MCF 10A (cell line): ENCODE measurements at regions of chr11 and their contacts with region 1.

Region 1: GRCh38 chr11:72585762-72586311 is 88.4 kb downstream of the PDE2A start:
- DNase-seq: peak; percentile 71
- H3K4me3 Mint-ChIP-seq: no peak overlapping the region
- H3K27ac Mint-ChIP-seq: no peak overlapping the region
- H3K4me1 Mint-ChIP-seq: peaks cover 3% of the 10 kb centered on the region
- H3K27me3 Mint-ChIP-seq: peaks cover 37% of the 10 kb centered on the region
- CTCF ChIP-seq: peak; percentile 77

Region 2: GRCh38 chr11:72483412-72484186 is 102.2 kb before region 1 on chr11:
- CTCF ChIA-PET with region 1: interaction called, 11 read pairs
- POLR2A ChIA-PET with region 1: no interaction called
- intact Hi-C with region 1: loop called (anchors 5 kb)
- DNase-seq: peak; percentile 44
- H3K4me3 Mint-ChIP-seq: no peak overlapping the region
- H3K27ac Mint-ChIP-seq: peak overlapping the region; percentile 91
- H3K4me1 Mint-ChIP-seq: peaks cover 15% of the 10 kb centered on the region
- H3K27me3 Mint-ChIP-seq: no peaks in the 10 kb centered on the region
- CTCF ChIP-seq: no peak

Region 3: DNA sequence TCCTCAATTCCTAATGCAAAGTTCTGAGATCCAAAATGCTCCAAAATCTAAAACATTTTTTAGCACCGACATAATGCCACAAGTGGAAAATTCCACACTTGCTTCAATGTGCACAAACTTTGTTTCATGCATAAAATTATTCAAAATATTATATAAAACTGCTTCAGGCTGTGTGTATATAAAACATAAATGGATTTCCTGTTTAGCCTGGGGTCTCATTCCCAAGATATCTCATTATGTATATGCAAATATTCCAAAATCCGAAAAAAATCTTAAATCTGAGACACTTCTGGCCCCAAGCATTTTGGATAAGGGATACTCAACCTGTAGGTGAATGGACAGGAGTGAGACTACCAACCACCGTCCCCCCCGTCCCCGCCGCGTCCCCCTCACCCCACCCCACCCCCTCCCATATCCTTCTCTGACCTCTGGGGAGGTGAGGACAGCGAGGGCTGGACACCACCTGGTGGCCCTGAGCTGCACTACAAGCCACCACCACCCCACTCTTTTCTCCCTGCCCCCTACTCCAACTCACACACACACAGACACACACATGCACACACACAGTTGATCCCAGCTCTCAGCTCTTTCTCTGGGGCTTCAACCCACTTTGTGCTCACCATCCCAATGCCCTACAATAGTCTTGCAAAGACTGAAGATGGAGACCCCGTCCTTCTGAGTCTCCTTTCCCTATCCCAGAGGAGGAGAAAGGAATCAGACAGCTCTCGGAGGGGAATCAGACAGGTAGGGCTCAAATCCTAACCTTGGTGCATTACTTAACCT is 12.6 kb before region 1 on chr11:
- CTCF ChIA-PET with region 1: interaction called, 15 read pairs
- POLR2A ChIA-PET with region 1: no interaction called
- intact Hi-C with region 1: no loop called
- DNase-seq: peak; percentile 41
- H3K4me3 Mint-ChIP-seq: no peak overlapping the region
- H3K27ac Mint-ChIP-seq: no peak overlapping the region
- H3K4me1 Mint-ChIP-seq: peaks cover 39% of the 10 kb centered on the region
- H3K27me3 Mint-ChIP-seq: no peaks in the 10 kb centered on the region
- CTCF ChIP-seq: peak; percentile 67

Region 4: DNA sequence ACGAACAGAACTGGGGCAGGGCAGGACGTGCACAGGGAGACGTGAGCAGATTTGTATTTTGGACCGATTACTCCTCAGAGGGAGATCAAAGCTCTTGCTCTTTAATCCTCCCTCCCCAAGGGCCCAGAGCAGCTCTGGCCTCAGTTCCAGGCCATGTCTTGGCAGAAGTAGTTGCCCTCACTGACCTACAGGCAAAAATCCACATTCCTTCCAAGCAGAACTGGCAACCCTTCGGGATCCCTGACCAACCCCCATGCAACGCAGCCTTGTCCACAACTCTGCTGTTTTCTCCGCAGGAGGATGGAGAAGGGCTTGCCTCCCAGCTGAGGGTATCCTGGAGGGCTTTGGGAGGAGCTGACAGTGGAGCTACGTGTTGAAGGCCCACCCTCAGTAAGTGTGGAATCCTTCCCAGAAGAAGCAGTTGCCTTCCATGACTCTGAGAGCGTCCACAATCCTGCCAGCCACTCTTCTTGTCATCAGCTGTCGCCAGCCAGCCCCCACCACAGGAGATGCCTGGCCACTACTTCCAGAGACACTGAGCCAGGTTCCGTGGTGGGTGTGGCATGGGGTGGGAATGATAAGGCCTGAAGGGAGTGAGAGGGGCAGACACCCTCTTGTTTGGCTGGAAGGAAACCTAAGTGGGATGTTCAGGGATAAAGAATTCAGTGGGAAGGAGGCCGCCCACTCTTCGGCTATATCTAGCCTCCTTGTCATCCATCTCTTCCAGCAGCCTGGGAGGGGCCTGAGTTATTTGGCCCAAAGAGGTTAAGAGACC is 20.3 kb after region 1 on chr11:
- CTCF ChIA-PET with region 1: interaction called, 15 read pairs
- POLR2A ChIA-PET with region 1: no interaction called
- intact Hi-C with region 1: no loop called
- DNase-seq: no peak
- H3K4me3 Mint-ChIP-seq: no peak overlapping the region
- H3K27ac Mint-ChIP-seq: no peak overlapping the region
- H3K4me1 Mint-ChIP-seq: no peaks in the 10 kb centered on the region
- H3K27me3 Mint-ChIP-seq: peaks cover 48% of the 10 kb centered on the region
- CTCF ChIP-seq: no peak

Region 5: GRCh38 chr11:72642884-72643511 is 57.2 kb after region 1 on chr11:
- CTCF ChIA-PET with region 1: interaction called, 8 read pairs
- POLR2A ChIA-PET with region 1: no interaction called
- intact Hi-C with region 1: loop called (anchors 1 kb)
- DNase-seq: peak; percentile 84
- H3K4me3 Mint-ChIP-seq: no peak overlapping the region
- H3K27ac Mint-ChIP-seq: no peak overlapping the region
- H3K4me1 Mint-ChIP-seq: peaks cover 7% of the 10 kb centered on the region
- H3K27me3 Mint-ChIP-seq: no peaks in the 10 kb centered on the region
- CTCF ChIP-seq: peak; percentile 97